ENCODE measurements at regions of chr20 and their contacts with region 1.

Region 1: GRCh38 chr20:58980700-58981627 is at the start of gene NELFCD:
- DNase-seq: peak; percentile 66 to 93
- H3K4me3 ChIP-seq: peak within 1 kb of the TSS; percentile 100
- H3K27ac ChIP-seq: peak within 1 kb of the TSS; percentile 27; the same call in 1 of the 2 replicates
- H3K4me1 ChIP-seq: peaks cover 13% of the 10 kb centered on the region
- H3K27me3 ChIP-seq: no peaks in the 10 kb centered on the region
- CTCF ChIP-seq: no peak
- total RNA-seq, gene NELFCD: 122 and 130 TPM in 2 replicates

Region 2: GRCh38 chr20:58420798-58421496 is 560.0 kb before region 1 on chr20:
- CTCF ChIA-PET with region 1: no interaction called
- POLR2A ChIA-PET with region 1: no interaction called
- intact Hi-C with region 1: no loop called
- DNase-seq: no peak
- H3K4me3 ChIP-seq: no peak overlapping the region
- H3K27ac ChIP-seq: no peak overlapping the region
- H3K4me1 ChIP-seq: no peaks in the 10 kb centered on the region
- H3K27me3 ChIP-seq: no peaks in the 10 kb centered on the region
- CTCF ChIP-seq: no peak

Region 3: DNA sequence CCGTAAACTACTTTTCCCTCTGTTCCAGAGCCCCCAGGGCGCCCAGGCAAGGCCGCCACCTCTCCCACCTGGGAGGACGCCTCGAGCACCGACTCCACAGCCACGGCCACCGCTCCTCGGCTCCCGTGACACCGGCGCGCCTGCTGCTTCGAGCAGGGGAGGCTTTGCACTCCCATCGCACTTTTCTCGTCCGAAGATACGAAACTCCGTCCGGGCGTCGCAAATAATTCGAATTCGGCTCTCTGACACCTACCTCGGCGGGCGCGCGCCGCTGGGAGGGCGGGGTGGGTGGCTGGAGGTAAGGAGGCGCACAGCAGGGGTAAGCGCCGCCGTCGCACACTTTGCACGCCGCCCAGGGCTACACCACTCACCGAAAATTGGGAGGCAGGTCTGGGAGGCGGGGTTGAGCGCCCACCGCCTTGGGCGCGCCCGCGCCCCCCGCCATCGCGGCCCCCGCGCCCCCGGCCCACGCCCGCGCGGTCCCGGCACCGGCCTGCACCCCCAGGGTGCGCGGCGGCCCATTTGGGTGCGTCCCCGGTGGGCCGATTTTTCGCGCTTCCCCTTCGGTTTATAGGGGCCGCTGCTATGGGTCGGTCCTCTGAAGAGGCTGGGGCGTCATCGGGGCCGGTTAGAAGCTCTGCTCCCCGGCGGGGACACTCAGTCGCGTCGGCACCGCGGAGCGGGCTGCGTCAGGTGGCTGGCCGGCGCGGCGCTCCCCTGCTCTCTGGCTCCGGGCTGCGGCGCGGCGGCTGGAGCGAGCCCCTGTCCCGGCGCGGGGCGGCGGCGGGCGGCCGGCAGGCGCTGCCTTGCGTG is 92.2 kb before region 1 on chr20:
- CTCF ChIA-PET with region 1: no interaction called
- POLR2A ChIA-PET with region 1: no interaction called
- intact Hi-C with region 1: loop called (anchors 1 kb)
- DNase-seq: peak; percentile 66 to 80
- H3K4me3 ChIP-seq: peak overlapping the region; percentile 55
- H3K27ac ChIP-seq: no peak overlapping the region; the same call in 1 of the 2 replicates
- H3K4me1 ChIP-seq: peaks cover 19% of the 10 kb centered on the region
- H3K27me3 ChIP-seq: no peaks in the 10 kb centered on the region
- CTCF ChIP-seq: no peak

Region 4: DNA sequence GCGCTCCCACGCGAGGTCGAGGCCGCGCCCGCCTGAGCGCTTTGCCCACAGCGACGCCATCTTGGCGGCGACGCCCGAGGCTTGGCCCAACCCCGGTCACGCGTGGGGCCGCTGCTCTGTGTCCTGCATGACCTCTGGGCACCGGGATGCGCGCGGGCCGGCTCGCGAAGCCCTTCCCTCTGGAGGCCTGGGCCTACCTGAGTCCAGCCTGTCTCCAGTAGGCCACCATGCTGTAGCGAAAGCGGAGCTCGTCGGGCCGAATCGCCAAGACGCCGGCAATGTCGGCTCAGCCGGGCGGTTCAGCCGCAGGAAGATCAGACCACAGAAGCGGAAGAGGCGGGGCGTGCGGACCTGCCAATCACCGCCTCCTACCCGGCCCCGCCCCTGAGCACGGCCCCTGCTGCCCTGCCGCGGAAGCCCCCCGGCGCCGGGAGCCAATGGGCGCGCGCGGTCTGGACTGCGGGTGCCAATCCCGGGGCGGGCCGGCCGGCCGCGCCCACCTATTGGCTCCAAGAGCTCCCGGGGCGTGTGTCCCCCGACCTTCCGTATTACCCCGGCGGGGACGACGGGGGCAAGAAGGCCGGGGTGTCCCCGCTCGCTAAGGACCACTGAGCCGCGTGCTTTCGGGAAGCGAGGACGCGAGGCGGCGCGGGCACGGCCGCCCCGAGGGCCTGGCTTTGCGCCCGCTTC is 51.2 kb after region 1 on chr20 and contains the start of gene ATP5F1E:
- CTCF ChIA-PET with region 1: no interaction called
- POLR2A ChIA-PET with region 1: no interaction called
- intact Hi-C with region 1: loop called (anchors 5 kb)
- DNase-seq: peak; percentile 90 to 98
- H3K4me3 ChIP-seq: peak within 1 kb of the TSS; percentile 80
- H3K27ac ChIP-seq: peak within 1 kb of the TSS; percentile 68
- H3K4me1 ChIP-seq: peaks cover 51% of the 10 kb centered on the region
- H3K27me3 ChIP-seq: no peaks in the 10 kb centered on the region
- CTCF ChIP-seq: no peak
- total RNA-seq, gene ATP5F1E: 76.3 and 84.8 TPM in 2 replicates

Region 5: GRCh38 chr20:59191756-59192532 is 211.0 kb after region 1 on chr20:
- CTCF ChIA-PET with region 1: no interaction called
- POLR2A ChIA-PET with region 1: no interaction called
- intact Hi-C with region 1: no loop called
- DNase-seq: no peak
- H3K4me3 ChIP-seq: no peak overlapping the region
- H3K27ac ChIP-seq: no peak overlapping the region
- H3K4me1 ChIP-seq: no peaks in the 10 kb centered on the region
- H3K27me3 ChIP-seq: peaks cover 96% of the 10 kb centered on the region
- CTCF ChIP-seq: no peak

Measured in PC-9 (cell line).